ENCODE measurements at regions of chr3 and their contacts with region 1.

Region 1: GRCh38 chr3:165854696-165855095 is 17.5 kb upstream of the BCHE start:
- DNase-seq: no peak
- ATAC-seq: no peak
- H3K4me3 ChIP-seq: no peak overlapping the region
- H3K27ac ChIP-seq: no peak overlapping the region
- H3K4me1 ChIP-seq: no peaks in the 10 kb centered on the region
- H3K27me3 ChIP-seq: no peaks in the 10 kb centered on the region
- CTCF ChIP-seq: peak; percentile 45

Region 2: DNA sequence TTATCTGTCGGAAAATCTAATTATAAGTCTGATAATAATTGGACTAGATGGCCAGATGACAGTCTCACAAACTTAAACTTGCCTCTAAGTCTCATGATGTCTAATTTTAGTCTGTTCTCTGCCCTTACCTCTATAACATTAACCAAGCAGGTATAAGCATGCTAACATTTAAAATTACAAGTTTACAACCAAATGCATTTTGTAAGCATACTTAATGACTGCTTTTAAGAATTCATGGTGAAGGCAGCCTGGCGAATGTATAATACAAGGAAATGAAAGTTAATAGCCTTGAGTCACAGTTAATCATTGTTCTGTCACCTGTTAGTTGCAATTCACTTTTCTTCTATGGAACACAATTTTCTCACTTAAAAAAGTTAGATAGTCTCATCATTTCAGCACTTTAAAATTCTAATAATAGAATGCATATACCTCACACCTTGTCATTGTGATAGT is 34.0 kb before region 1 on chr3:
- intact Hi-C with region 1: no loop called
- DNase-seq: no peak
- ATAC-seq: no peak
- H3K4me3 ChIP-seq: no peak overlapping the region
- H3K27ac ChIP-seq: no peak overlapping the region
- H3K4me1 ChIP-seq: no peaks in the 10 kb centered on the region
- H3K27me3 ChIP-seq: no peaks in the 10 kb centered on the region
- CTCF ChIP-seq: no peak

Region 3: DNA sequence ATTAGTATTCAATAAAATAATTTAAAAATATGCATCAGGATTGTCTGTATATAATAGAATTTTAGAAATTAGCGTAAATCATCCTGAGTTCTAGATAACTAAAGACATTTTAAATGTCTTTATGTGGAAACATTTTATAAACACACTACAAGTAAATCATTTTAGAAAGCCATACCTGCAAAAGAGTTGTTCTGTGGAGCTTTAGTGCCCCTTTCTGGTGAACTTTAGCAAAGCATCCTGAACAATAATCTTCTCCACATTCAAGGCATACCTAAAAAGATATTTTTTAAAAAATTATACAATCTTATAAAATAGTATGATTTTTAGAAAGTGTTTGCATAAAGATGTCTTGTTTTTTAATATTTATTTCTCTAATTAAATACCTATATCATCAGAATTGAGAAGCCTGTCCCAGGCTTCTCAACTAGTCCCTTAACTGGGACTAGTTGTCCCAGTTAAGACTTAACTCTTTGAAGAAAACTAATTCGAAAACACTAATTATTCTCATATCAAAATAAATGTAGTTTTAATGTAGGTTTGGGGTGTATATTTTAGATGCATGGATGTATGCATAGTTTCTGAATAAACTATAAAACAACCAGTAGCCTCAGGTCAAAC is 1495.7 kb after region 1 on chr3:
- intact Hi-C with region 1: loop called in 1 of 2 experiments (anchors 10 kb)
- DNase-seq: no peak
- ATAC-seq: peak in 1 of 4 donors; percentile 68
- H3K4me3 ChIP-seq: no peak overlapping the region
- H3K27ac ChIP-seq: no peak overlapping the region
- H3K4me1 ChIP-seq: no peaks in the 10 kb centered on the region
- H3K27me3 ChIP-seq: no peaks in the 10 kb centered on the region
- CTCF ChIP-seq: peak; percentile 79

Measured in psoas muscle (tissue), 8 donors.